Transverse colon (tissue), 4 donors: ENCODE measurements at regions of chr19 and their contacts with region 1.

Region 1: GRCh38 chr19:46513461-46514236 is 18.0 kb upstream of the PNMA8B start:
- DNase-seq: peak; percentile 83
- H3K4me3 ChIP-seq: no peak overlapping the region
- H3K27ac ChIP-seq: no peak overlapping the region
- H3K4me1 ChIP-seq: no peaks in the 10 kb centered on the region
- H3K27me3 ChIP-seq: peaks cover 14% of the 10 kb centered on the region
- CTCF ChIP-seq: peak; percentile 88 to 95 (median 93)
- EP300 ChIP-seq: no peak
- POLR2A ChIP-seq: no peak

Region 2: DNA sequence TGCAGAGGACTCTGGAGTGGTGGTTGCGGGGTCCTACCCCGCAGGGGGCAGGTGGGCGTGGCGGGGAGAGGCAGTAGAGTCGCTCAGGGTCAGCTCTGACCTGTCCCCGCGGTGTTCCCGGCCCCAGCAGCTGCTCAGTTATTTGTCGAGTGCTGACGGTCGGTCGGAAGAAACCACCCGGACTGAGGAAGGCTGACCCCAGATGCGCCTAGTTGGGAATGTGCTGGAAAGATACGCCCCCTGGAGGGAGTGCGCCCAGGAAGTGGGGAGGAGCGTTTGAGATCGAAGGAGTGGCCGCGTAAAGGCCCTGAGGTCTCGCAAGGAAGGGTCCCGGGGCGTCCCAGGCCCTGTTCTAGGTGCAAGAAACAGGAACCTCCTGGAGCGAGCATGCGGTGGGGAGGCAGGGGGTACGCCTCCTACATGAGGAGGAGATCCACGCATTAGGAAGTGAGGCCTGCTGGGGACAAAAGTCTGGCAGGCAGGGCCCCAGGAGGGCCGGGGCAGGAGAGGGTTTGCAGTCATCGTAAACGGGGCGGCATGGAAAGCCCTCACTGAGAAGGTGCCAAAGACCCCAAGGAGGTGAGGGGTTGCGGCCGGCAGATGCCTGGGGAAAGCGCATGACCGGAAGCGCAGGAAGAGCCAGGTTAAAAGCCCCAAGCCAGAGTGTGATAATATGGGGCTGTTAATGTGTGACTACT is 109.4 kb before region 1 on chr19:
- in situ Hi-C with region 1: loop called in 1 of 4 experiments (anchors 10 kb)
- intact Hi-C with region 1: no loop called
- DNase-seq: peak; percentile 63
- H3K4me3 ChIP-seq: peak overlapping the region in 3 of 4 donors; percentile 37 to 52 (median 40)
- H3K27ac ChIP-seq: peak overlapping the region; percentile 65 to 72 (median 70)
- H3K4me1 ChIP-seq: peaks cover 0 to 25% (median 19%) of the 10 kb centered on the region in 4 donors
- H3K27me3 ChIP-seq: peaks cover 65% of the 10 kb centered on the region
- CTCF ChIP-seq: peak in 3 of 5 experiments; percentile 15 to 38 (median 32)
- EP300 ChIP-seq: no peak
- POLR2A ChIP-seq: peak; percentile 11